K562 (cell line): ENCODE measurements at regions of chr1 and their contacts with region 1.

Region 1: DNA sequence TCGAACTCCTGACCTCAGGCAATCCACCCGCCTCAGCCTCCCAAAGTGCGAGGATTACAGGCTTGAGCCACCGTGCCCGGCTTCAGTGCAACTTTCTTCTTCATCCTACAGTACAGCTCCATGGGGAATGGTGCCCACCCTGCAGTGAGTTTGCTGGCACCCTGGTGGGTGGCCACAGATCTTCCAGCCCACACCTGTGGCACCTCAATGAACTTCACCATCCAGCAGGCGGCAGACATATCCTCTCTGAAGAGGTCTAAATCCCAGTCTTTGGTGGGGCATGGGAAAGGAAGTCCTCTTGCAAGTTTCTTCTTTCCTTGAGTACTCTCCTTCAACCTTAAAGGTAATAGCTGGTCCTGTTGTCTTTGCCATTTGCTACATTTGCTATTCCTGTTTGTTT is 18.1 kb upstream of the ZBTB8A start:
- DNase-seq: peak in 1 of 4 experiments; percentile 30
- ATAC-seq: peak; percentile 62
- H3K4me3 ChIP-seq: no peak overlapping the region
- H3K27ac ChIP-seq: no peak overlapping the region
- H3K4me1 ChIP-seq: no peaks in the 10 kb centered on the region
- H3K27me3 ChIP-seq: peaks cover 4 to 10% of the 10 kb centered on the region in 2 experiments; a peak in 4 of 5 replicates
- CTCF ChIP-seq: peak in 2 of 3 experiments; percentile 27 to 40; a peak in 3 of 6 replicates
- EP300 ChIP-seq: no peak
- POLR2A ChIP-seq: no peak
- RAD21 ChIP-seq: peak; percentile 33 to 53; a peak in 3 of 4 replicates

Region 2: DNA sequence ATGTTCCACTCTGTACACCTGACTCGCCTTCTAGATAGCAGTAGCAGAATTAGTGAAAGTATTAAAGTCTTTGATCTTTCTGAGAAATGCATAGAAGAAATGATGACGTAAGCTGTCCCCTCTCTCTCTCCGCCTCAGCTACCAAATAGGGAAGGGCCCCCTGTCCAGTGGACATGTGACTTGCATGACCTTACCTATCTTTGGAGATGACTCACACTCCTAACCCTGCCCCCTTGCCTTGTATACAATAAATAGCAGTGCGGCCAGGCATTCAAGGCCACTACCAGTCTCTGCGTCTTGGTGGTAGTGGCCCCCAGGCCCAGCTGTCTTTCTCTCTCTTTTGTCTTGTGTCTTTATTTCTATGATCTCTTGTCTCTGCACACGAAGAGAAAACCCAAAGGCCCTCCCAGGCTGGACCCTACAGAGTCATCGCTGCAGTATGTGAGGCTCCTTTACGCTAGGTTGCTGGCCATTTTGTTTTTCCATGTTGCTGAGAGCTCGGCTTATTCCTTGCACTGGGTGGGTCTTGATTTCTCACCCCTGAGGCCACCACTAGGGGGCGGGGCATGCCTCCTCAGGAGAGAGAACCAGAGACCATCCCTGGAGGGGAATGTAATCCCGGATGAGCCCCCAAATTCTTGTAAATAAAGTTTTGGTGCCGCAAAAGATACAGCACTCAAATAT is 72.2 kb before region 1 on chr1:
- CTCF ChIA-PET with region 1: interaction called, 3 read pairs
- POLR2A ChIA-PET with region 1: no interaction called
- in situ Hi-C with region 1: no loop called
- intact Hi-C with region 1: loop called (anchors 5 kb)
- DNase-seq: peak; percentile 61 to 87 (median 72)
- ATAC-seq: peak; percentile 96
- H3K4me3 ChIP-seq: no peak overlapping the region
- H3K27ac ChIP-seq: peak overlapping the region; percentile 18; the same call in 2 of the 3 replicates
- H3K4me1 ChIP-seq: peaks cover 0 to 4% of the 10 kb centered on the region in 2 experiments; a peak in 3 of 5 replicates
- H3K27me3 ChIP-seq: peaks cover 20 to 21% of the 10 kb centered on the region in 2 experiments; a peak in 4 of 5 replicates
- CTCF ChIP-seq: peak; percentile 85 to 87 (median 87)
- EP300 ChIP-seq: no peak
- POLR2A ChIP-seq: no peak
- RAD21 ChIP-seq: peak; percentile 49 to 69

Region 3: GRCh38 chr1:32619701-32620485 is 98.7 kb after region 1 on chr1:
- CTCF ChIA-PET with region 1: no interaction called
- POLR2A ChIA-PET with region 1: no interaction called
- in situ Hi-C with region 1: no loop called
- intact Hi-C with region 1: loop called (anchors 5 kb)
- DNase-seq: no peak
- ATAC-seq: no peak
- H3K4me3 ChIP-seq: no peak overlapping the region
- H3K27ac ChIP-seq: no peak overlapping the region
- H3K4me1 ChIP-seq: no peaks in the 10 kb centered on the region; a peak in 1 of 5 replicates
- H3K27me3 ChIP-seq: no peaks in the 10 kb centered on the region
- CTCF ChIP-seq: peak in 2 of 3 experiments; percentile 3 to 43; a peak in 3 of 6 replicates
- EP300 ChIP-seq: no peak
- POLR2A ChIP-seq: no peak
- RAD21 ChIP-seq: peak; percentile 40

Region 4: GRCh38 chr1:32650752-32651460 is 129.7 kb after region 1 on chr1 and contains the start of gene RBBP4:
- CTCF ChIA-PET with region 1: no interaction called
- POLR2A ChIA-PET with region 1: interaction called, 5 read pairs
- in situ Hi-C with region 1: no loop called
- intact Hi-C with region 1: loop called (anchors 2 kb)
- DNase-seq: peak; percentile 99 to 100 (median 100)
- ATAC-seq: peak; percentile 95
- H3K4me3 ChIP-seq: peak within 1 kb of the TSS; percentile 84
- H3K27ac ChIP-seq: peak within 1 kb of the TSS; percentile 100
- H3K4me1 ChIP-seq: peaks cover 22 to 23% of the 10 kb centered on the region in 2 experiments; a peak in 4 of 5 replicates
- H3K27me3 ChIP-seq: no peaks in the 10 kb centered on the region
- CTCF ChIP-seq: 0 out of 6 replicates have a peak, but pooled peaks of 1 of the 3 experiments have one; percentile 1
- EP300 ChIP-seq: no peak; the same call in 1 of the 2 replicates
- POLR2A ChIP-seq: peak; percentile 87
- RAD21 ChIP-seq: peak in 1 of 2 experiments; percentile 21; a peak in 2 of 4 replicates
- polyA plus RNA-seq, gene RBBP4: 248 to 285 TPM

Region 5: GRCh38 chr1:32695098-32695904 is 174.1 kb after region 1 on chr1:
- CTCF ChIA-PET with region 1: no interaction called
- POLR2A ChIA-PET with region 1: interaction called, 3 read pairs
- in situ Hi-C with region 1: no loop called
- intact Hi-C with region 1: loop called (anchors 10 kb)
- DNase-seq: peak; percentile 39 to 89 (median 54)
- ATAC-seq: peak; percentile 79
- H3K4me3 ChIP-seq: peak overlapping the region; percentile 1; the same call in 1 of the 2 replicates
- H3K27ac ChIP-seq: peak overlapping the region; percentile 48; the same call in 2 of the 3 replicates
- H3K4me1 ChIP-seq: peaks cover 14 to 19% of the 10 kb centered on the region in 2 experiments
- H3K27me3 ChIP-seq: no peaks in the 10 kb centered on the region
- CTCF ChIP-seq: no peak
- EP300 ChIP-seq: no peak
- POLR2A ChIP-seq: no peak
- RAD21 ChIP-seq: no peak

Region 6: GRCh38 chr1:32870615-32871363 is 349.6 kb after region 1 on chr1 and contains the start of gene FNDC5:
- CTCF ChIA-PET with region 1: interaction called, 5 read pairs
- POLR2A ChIA-PET with region 1: no interaction called
- in situ Hi-C with region 1: loop called (anchors 5 kb)
- intact Hi-C with region 1: loop called (anchors 2 kb)
- DNase-seq: peak; percentile 37 to 86 (median 72)
- ATAC-seq: peak; percentile 80
- H3K4me3 ChIP-seq: peak within 1 kb of the TSS; percentile 28
- H3K27ac ChIP-seq: no peak within 1 kb of the TSS
- H3K4me1 ChIP-seq: peaks cover 5 to 16% of the 10 kb centered on the region in 2 experiments; a peak in 4 of 5 replicates
- H3K27me3 ChIP-seq: peaks cover 4 to 20% of the 10 kb centered on the region in 2 experiments; a peak in 3 of 5 replicates
- CTCF ChIP-seq: no peak
- EP300 ChIP-seq: no peak
- POLR2A ChIP-seq: no peak
- RAD21 ChIP-seq: no peak
- polyA plus RNA-seq, gene FNDC5: 0.06 to 0.10 TPM

Region 7: DNA sequence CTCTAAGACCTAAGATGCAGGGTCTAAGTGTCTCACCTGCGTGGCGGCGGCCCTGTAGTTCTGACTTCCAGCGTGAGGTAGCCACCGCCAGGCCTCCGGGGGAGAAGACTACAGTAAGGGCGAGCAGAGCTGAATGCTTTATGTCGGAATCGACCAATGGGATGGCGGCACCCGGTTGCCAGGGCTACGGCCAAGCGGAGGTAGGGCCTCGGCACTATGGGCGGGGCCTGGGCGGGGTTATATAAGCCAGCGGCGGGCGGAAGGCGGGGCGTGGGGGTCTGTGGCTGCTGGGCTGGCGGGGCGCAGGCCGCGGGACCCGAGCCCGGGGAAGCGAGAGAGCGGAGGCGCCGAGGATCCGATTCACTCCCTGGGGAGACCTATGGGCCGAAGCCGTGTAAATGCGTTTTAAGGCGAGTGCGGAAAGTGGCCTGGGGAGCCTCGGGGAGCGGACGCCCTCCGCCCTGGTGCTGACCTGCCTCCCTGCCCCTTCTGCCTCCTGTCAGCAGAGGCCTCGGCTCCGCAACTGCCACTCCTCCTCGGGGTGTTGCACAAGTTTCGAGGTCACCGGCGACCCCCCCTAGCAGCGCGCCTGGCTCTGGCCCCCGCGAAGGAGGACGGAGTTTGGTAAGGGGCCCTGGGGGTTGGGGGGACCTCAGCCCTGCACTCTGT is 559.9 kb after region 1 on chr1 and contains the start of gene AZIN2:
- CTCF ChIA-PET with region 1: no interaction called
- POLR2A ChIA-PET with region 1: no interaction called
- in situ Hi-C with region 1: no loop called
- intact Hi-C with region 1: loop called (anchors 10 kb)
- DNase-seq: peak; percentile 96 to 100 (median 100)
- ATAC-seq: peak; percentile 99
- H3K4me3 ChIP-seq: peak within 1 kb of the TSS; percentile 49
- H3K27ac ChIP-seq: no peak within 1 kb of the TSS
- H3K4me1 ChIP-seq: peaks cover 14% of the 10 kb centered on the region in 2 experiments; a peak in 4 of 5 replicates
- H3K27me3 ChIP-seq: peaks cover 19 to 36% of the 10 kb centered on the region in 2 experiments
- CTCF ChIP-seq: no peak
- EP300 ChIP-seq: no peak
- POLR2A ChIP-seq: peak; percentile 61
- RAD21 ChIP-seq: no peak
- polyA plus RNA-seq, gene AZIN2: not detected